ENCODE measurements at regions of chr12 and their contacts with region 1.

Region 1: DNA sequence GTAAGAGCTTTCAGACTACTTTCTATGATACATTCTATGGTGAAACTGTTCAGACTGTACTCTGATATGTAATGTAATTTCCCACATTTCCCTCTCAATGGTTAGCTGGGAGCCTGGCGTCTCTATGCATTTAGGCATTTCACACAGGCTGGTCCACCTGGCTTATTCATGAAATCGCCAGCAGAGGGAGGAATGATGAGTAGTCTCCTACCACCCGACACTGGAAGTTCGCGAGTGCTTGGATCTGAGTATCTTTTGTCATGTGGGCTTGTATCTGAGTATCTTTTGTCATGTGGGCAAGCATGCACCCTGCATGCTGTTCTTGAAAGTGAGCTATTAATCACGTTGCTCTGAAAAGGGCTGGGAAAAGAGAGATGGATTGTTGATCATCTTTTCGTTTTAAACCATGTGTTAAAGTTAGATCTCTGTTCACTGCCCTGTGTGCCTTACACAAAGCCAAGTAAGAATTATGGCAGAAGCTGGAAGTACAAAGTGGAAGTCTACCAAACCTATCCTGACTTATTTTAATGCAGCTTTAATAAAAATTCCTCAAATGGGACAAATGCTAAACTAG is 235.0 kb downstream of the ATP23 start:
- DNase-seq: no peak
- H3K4me3 ChIP-seq: no peak overlapping the region
- H3K27ac ChIP-seq: no peak overlapping the region
- H3K4me1 ChIP-seq: peaks cover 0 to 41% (median 33%) of the 10 kb centered on the region in 4 donors
- H3K27me3 ChIP-seq: no peaks in the 10 kb centered on the region
- CTCF ChIP-seq: peak; percentile 38 to 43 (median 41)
- EP300 ChIP-seq: no peak
- POLR2A ChIP-seq: no peak

Region 2: DNA sequence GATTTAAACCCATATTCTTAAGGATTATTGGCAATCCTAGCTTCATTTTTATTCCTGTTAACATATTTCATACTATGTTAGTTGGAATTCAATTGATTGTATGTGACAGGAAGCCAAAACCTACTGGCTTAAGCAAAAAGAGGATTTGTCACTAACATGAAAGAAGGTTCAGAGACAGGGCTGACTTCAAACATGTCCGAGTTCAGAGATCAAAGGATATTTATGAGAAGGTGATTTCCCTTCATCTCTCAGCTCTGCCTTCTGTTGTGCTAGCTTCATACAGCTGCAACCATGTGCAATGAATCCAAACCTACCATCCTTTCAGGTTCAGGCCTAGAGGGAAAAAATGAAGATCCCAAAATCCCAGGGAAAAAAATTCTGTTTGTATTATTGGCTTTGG is 114.7 kb after region 1 on chr12:
- intact Hi-C with region 1: loop called (anchors 10 kb)
- DNase-seq: no peak
- H3K4me3 ChIP-seq: no peak overlapping the region
- H3K27ac ChIP-seq: no peak overlapping the region
- H3K4me1 ChIP-seq: no peaks in the 10 kb centered on the region
- H3K27me3 ChIP-seq: no peaks in the 10 kb centered on the region
- CTCF ChIP-seq: no peak
- EP300 ChIP-seq: no peak
- POLR2A ChIP-seq: no peak

Measured in esophagus muscularis mucosa (tissue), 4 donors.